ENCODE measurements at regions of chr22 and their contacts with region 1.

Region 1: GRCh38 chr22:42279568-42279976 is 9.1 kb upstream of the TCF20 start:
- DNase-seq: no peak
- H3K4me3 ChIP-seq: no peak overlapping the region
- H3K27ac ChIP-seq: no peak overlapping the region
- H3K4me1 ChIP-seq: peaks cover 22% of the 10 kb centered on the region
- H3K27me3 ChIP-seq: no peaks in the 10 kb centered on the region
- CTCF ChIP-seq: no peak
- POLR2A ChIP-seq: no peak

Region 2: GRCh38 chr22:42321908-42322561 is 42.5 kb after region 1 on chr22:
- intact Hi-C with region 1: loop called (anchors 1 kb)
- DNase-seq: no peak
- H3K4me3 ChIP-seq: no peak overlapping the region
- H3K27ac ChIP-seq: no peak overlapping the region
- H3K4me1 ChIP-seq: peaks cover 24% of the 10 kb centered on the region
- H3K27me3 ChIP-seq: no peaks in the 10 kb centered on the region
- CTCF ChIP-seq: no peak
- POLR2A ChIP-seq: no peak